Activated CD4-positive, alpha-beta T cell treated with anti-CD3 and anti-CD28 coated beads for 36 hours (primary cell): ENCODE measurements at regions of chr4 and their contacts with region 1.

Region 1: GRCh38 chr4:121041307-121042090 is 30.8 kb downstream of the NDNF start:
- DNase-seq: peak; percentile 55
- ATAC-seq: peak; percentile 100
- H3K4me3 Mint-ChIP-seq: no peak overlapping the region
- H3K27ac Mint-ChIP-seq: no peak overlapping the region
- H3K4me1 Mint-ChIP-seq: peaks cover 13% of the 10 kb centered on the region
- H3K27me3 Mint-ChIP-seq: peaks cover 26% of the 10 kb centered on the region

Region 2: GRCh38 chr4:120718979-120719566 is 322.4 kb before region 1 on chr4:
- CTCF ChIA-PET with region 1: no interaction called
- POLR2A ChIA-PET with region 1: no interaction called
- intact Hi-C with region 1: no loop called
- DNase-seq: peak; percentile 41
- ATAC-seq: peak; percentile 53
- H3K4me3 Mint-ChIP-seq: no peak overlapping the region
- H3K27ac Mint-ChIP-seq: no peak overlapping the region
- H3K4me1 Mint-ChIP-seq: no peaks in the 10 kb centered on the region
- H3K27me3 Mint-ChIP-seq: peaks cover 11% of the 10 kb centered on the region

Region 3: GRCh38 chr4:120902925-120903324 is 138.6 kb before region 1 on chr4:
- CTCF ChIA-PET with region 1: no interaction called
- POLR2A ChIA-PET with region 1: no interaction called
- intact Hi-C with region 1: loop called (anchors 1 to 5 kb)
- DNase-seq: peak; percentile 22
- ATAC-seq: peak; percentile 87
- H3K4me3 Mint-ChIP-seq: no peak overlapping the region
- H3K27ac Mint-ChIP-seq: no peak overlapping the region
- H3K4me1 Mint-ChIP-seq: peaks cover 7% of the 10 kb centered on the region
- H3K27me3 Mint-ChIP-seq: peaks cover 13% of the 10 kb centered on the region

Region 4: GRCh38 chr4:121072224-121073003 is 30.9 kb after region 1 on chr4 and contains the start of gene NDNF:
- CTCF ChIA-PET with region 1: interaction called, 4 read pairs
- POLR2A ChIA-PET with region 1: no interaction called
- intact Hi-C with region 1: loop called in 1 of 2 experiments (anchors 1 kb)
- DNase-seq: peak; percentile 65
- ATAC-seq: peak; percentile 72
- H3K4me3 Mint-ChIP-seq: peak within 1 kb of the TSS; percentile 73
- H3K27ac Mint-ChIP-seq: no peak within 1 kb of the TSS
- H3K4me1 Mint-ChIP-seq: peaks cover 16% of the 10 kb centered on the region
- H3K27me3 Mint-ChIP-seq: peaks cover 60% of the 10 kb centered on the region
- total RNA-seq, gene NDNF: 0.11 to 0.16 TPM

Region 5: GRCh38 chr4:121150486-121150885 is 109.0 kb after region 1 on chr4:
- CTCF ChIA-PET with region 1: no interaction called
- POLR2A ChIA-PET with region 1: no interaction called
- intact Hi-C with region 1: loop called (anchors 1 to 5 kb)
- DNase-seq: peak; percentile 32
- ATAC-seq: peak; percentile 61
- H3K4me3 Mint-ChIP-seq: no peak overlapping the region
- H3K27ac Mint-ChIP-seq: no peak overlapping the region
- H3K4me1 Mint-ChIP-seq: peaks cover 54% of the 10 kb centered on the region
- H3K27me3 Mint-ChIP-seq: peaks cover 3% of the 10 kb centered on the region

Region 6: GRCh38 chr4:121252224-121252806 is 210.8 kb after region 1 on chr4:
- CTCF ChIA-PET with region 1: no interaction called
- POLR2A ChIA-PET with region 1: no interaction called
- intact Hi-C with region 1: loop called (anchors 1 to 2 kb)
- DNase-seq: peak; percentile 73
- ATAC-seq: no peak
- H3K4me3 Mint-ChIP-seq: no peak overlapping the region
- H3K27ac Mint-ChIP-seq: no peak overlapping the region
- H3K4me1 Mint-ChIP-seq: peaks cover 67% of the 10 kb centered on the region
- H3K27me3 Mint-ChIP-seq: no peaks in the 10 kb centered on the region

Region 7: DNA sequence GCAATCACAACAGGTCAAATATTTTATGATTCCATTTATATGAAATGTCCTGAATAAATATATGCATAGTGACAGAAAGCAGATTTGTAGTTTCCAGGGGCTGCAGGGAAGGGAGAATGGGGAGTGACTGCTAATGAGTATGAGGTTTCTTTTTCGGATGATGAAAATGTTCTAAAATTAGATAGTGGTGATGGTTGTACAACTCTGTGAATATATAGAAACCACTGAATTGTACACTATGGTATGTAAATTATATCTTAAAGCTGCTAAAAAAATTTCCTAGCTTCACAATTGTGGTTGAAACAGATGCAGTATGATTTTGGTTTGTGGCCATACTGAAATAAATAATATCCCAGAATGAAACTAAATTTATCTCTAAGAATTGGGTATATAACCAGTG is 1428.0 kb after region 1 on chr4:
- CTCF ChIA-PET with region 1: no interaction called
- POLR2A ChIA-PET with region 1: no interaction called
- intact Hi-C with region 1: no loop called
- DNase-seq: no peak
- ATAC-seq: peak; percentile 55
- H3K4me3 Mint-ChIP-seq: no peak overlapping the region
- H3K27ac Mint-ChIP-seq: no peak overlapping the region
- H3K4me1 Mint-ChIP-seq: peaks cover 4% of the 10 kb centered on the region
- H3K27me3 Mint-ChIP-seq: no peaks in the 10 kb centered on the region